ENCODE measurements at regions of chr13 and their contacts with region 1.

Region 1: GRCh38 chr13:46184277-46184699 is 2.3 kb upstream of the LCP1 start:
- DNase-seq: peak; percentile 81
- H3K4me3 Mint-ChIP-seq: peak overlapping the region; percentile 93
- H3K27ac Mint-ChIP-seq: peak overlapping the region; percentile 98
- H3K4me1 Mint-ChIP-seq: peaks cover 41% of the 10 kb centered on the region
- H3K27me3 Mint-ChIP-seq: no peaks in the 10 kb centered on the region

Region 2: GRCh38 chr13:46052319-46053161 is 131.7 kb before region 1 on chr13 and contains the start of gene ZC3H13:
- CTCF ChIA-PET with region 1: no interaction called
- POLR2A ChIA-PET with region 1: no interaction called
- DNase-seq: peak; percentile 97
- H3K4me3 Mint-ChIP-seq: peak within 1 kb of the TSS; percentile 92
- H3K27ac Mint-ChIP-seq: peak within 1 kb of the TSS; percentile 96
- H3K4me1 Mint-ChIP-seq: peaks cover 39% of the 10 kb centered on the region
- H3K27me3 Mint-ChIP-seq: peaks cover 6% of the 10 kb centered on the region
- total RNA-seq, gene ZC3H13: 38.0 to 50.0 TPM

Region 3: DNA sequence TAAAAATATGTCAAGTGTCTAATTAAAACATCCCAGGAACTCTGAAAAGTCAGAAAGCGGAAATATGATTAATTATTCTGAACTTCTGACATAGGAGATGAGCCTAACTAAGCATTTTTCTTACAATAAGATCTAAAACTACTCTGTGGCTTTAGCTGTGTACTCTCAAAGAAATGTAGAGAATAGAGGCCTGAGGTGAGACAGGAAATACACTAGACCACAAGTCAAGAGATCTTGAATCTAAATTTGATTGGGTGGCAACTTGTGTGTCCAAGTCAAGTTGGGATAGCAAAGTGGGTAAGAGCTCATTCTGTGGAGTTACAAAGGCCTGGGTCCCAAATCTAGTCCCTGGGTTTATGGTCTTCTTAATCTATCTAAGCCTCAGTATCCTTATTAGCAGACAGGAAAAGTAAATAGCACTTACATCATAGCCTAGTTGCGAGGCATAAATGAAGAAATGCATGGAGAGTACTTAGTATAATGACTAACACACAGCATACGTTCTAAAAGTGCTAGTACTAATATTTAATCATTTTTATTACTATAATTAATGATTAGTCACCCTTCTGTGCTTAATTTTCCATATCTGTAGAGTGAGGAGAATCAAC is 18.0 kb after region 1 on chr13:
- CTCF ChIA-PET with region 1: interaction called, 11 read pairs
- POLR2A ChIA-PET with region 1: no interaction called
- DNase-seq: peak; percentile 33
- H3K4me3 Mint-ChIP-seq: peak overlapping the region; percentile 12
- H3K27ac Mint-ChIP-seq: peak overlapping the region; percentile 80
- H3K4me1 Mint-ChIP-seq: peaks cover 52% of the 10 kb centered on the region
- H3K27me3 Mint-ChIP-seq: no peaks in the 10 kb centered on the region

Region 4: DNA sequence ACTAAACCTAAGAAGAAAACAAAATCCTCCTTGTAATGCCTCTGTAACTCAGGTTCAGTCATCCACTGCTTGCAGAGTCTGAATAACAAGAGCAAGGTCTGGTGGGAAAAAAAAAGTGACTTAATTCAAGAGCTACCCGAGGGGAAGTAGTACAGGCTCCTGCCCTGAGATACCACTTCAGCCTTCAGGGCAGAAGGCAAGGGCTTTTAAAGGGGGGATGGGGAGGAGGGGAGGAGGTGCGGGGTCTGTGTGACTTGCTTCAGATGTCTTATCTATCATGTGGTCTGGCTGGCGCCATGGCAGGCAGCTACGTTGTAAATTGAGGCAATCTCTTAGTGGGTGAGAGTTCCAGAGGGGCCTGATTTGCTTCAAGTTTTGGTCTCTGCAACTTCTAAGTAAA is 94.2 kb after region 1 on chr13:
- CTCF ChIA-PET with region 1: no interaction called
- POLR2A ChIA-PET with region 1: no interaction called
- DNase-seq: no peak
- H3K4me3 Mint-ChIP-seq: no peak overlapping the region
- H3K27ac Mint-ChIP-seq: no peak overlapping the region
- H3K4me1 Mint-ChIP-seq: no peaks in the 10 kb centered on the region
- H3K27me3 Mint-ChIP-seq: peaks cover 1% of the 10 kb centered on the region